G401 (cell line): ENCODE measurements at regions of chr9 and their contacts with region 1.

Region 1: GRCh38 chr9:80552931-80553330 is 981.2 kb downstream of the TLE4 start:
- DNase-seq: no peak

Region 2: DNA sequence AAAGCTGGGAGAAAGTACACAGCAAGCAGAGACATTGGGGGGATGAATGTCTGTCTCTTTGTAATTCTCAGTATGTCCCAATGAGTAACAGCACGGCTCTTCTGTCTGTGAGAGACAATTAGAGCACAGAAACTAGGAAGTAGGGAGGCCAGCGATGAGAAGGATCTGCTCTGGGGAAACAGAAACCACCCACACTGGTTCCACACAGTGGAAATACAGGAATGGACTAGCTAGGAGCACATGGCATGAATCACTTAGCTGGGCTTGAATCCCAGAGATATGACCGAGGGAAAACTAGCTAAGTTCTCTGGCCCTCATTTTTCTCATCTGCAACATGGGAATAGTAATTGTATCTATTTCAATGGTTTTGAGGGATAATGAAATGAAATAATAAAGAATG is 85.3 kb before region 1 on chr9:
- in situ Hi-C with region 1: loop called (anchors 25 kb)
- DNase-seq: no peak

Region 3: GRCh38 chr9:80492234-80492633 is 60.7 kb before region 1 on chr9:
- in situ Hi-C with region 1: no loop called
- DNase-seq: no peak